ENCODE measurements at regions of chrX and their contacts with region 1.

Region 1: DNA sequence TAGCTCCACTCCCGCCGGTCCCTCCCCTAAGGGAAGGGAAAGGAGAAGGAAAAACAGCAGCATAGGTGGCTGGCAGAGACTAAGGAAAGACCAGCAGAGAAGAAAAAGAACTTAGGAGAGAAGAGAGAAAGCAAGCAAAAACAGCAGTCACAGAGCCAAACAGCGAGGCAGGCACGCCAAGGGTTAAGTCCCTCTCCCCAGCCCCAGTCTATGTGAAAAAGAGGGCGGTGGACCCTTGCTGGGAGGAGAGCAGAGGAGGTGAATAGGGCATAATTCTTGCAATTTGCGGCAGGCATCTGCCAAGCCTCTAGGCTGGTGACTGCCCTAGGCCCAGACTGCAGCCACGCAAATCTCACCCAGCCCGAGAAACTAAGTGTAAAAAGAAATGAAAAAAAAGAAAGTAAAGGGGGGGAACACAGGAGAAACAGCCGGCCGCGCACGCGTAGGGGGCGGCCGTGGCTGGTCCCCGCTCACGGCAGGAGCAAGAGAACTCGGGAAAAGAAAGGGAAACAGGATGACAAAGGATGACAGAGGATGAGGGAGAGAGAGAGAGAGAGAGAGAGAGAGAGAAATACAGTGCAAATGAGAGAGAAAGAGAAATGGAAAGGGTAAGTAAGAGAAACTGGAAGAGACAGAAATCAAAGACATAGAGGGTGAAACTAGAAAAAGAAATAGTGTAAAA is 48.6 kb downstream of the MAGEA9 start:
- DNase-seq: peak; percentile 17
- ATAC-seq: peak; percentile 82
- H3K4me3 ChIP-seq: peak overlapping the region; percentile 57; the same call in 1 of the 2 replicates
- H3K27ac ChIP-seq: peak overlapping the region; percentile 79
- H3K4me1 ChIP-seq: no peaks in the 10 kb centered on the region
- H3K27me3 ChIP-seq: no peaks in the 10 kb centered on the region
- CTCF ChIP-seq: no peak
- EP300 ChIP-seq: no peak
- POLR2A ChIP-seq: no peak
- RAD21 ChIP-seq: no peak

Region 2: GRCh38 chrX:149259241-149259640 is 571.1 kb before region 1 on chrX:
- CTCF ChIA-PET with region 1: no interaction called
- POLR2A ChIA-PET with region 1: no interaction called
- RAD21 ChIA-PET with region 1: no interaction called
- SMC1A ChIA-PET with region 1: no interaction called
- in situ Hi-C with region 1: no loop called
- intact Hi-C with region 1: no loop called
- DNase-seq: no peak
- ATAC-seq: no peak
- H3K4me3 ChIP-seq: no peak overlapping the region
- H3K27ac ChIP-seq: no peak overlapping the region
- H3K4me1 ChIP-seq: no peaks in the 10 kb centered on the region
- H3K27me3 ChIP-seq: no peaks in the 10 kb centered on the region
- CTCF ChIP-seq: no peak
- EP300 ChIP-seq: no peak
- POLR2A ChIP-seq: no peak
- RAD21 ChIP-seq: no peak

Region 3: DNA sequence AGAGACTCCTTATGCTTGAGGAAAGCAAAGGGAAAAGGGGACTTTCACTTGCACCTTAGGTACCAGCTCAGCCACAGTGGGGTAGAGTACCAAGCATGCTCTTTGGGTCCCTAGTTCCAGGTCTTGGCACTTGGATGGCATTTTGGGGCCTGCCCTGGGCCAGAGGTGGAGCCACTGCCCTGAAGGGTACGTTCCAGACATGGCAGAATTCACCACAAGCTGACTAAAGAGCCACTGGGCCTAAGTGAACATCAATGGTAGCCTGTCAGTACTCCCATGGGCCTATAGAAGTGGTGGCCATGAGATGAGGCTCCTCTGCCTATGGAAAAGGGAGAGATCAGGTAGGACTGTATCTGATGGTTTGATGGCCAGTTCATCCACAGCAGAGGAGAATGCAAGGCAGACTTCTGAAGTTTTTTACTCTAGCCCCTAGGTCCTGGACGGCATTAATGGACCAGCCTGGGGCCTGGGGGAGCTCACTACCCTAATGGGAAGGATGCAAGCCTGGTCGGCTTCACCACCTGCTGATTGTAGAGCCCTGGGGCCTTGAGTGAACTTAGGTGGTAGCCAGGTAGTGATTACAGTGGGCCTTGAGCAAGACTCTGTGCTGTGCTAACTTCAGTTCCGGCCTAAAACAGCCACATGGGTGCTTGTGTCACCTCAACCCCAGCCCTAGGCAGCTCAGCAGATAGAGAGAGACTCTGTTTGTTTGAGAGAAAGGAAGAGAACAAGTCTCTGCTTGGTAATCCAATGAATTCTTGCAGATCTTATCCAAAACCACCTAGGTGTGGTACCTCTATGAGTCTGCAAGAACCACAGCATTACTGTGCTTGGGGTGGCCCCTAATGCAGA is 79.2 kb after region 1 on chrX:
- CTCF ChIA-PET with region 1: no interaction called
- POLR2A ChIA-PET with region 1: no interaction called
- RAD21 ChIA-PET with region 1: no interaction called
- SMC1A ChIA-PET with region 1: no interaction called
- in situ Hi-C with region 1: no loop called
- intact Hi-C with region 1: no loop called
- DNase-seq: no peak
- ATAC-seq: peak; percentile 30
- H3K4me3 ChIP-seq: no peak overlapping the region
- H3K27ac ChIP-seq: no peak overlapping the region
- H3K4me1 ChIP-seq: peaks cover 10% of the 10 kb centered on the region
- H3K27me3 ChIP-seq: no peaks in the 10 kb centered on the region
- CTCF ChIP-seq: no peak
- EP300 ChIP-seq: no peak
- POLR2A ChIP-seq: no peak
- RAD21 ChIP-seq: no peak

Region 4: GRCh38 chrX:149938427-149939270 is 108.3 kb after region 1 on chrX and contains the start of gene EOLA2:
- CTCF ChIA-PET with region 1: interaction called, 5 read pairs
- POLR2A ChIA-PET with region 1: interaction called, 3 read pairs
- RAD21 ChIA-PET with region 1: interaction called, 11 read pairs
- SMC1A ChIA-PET with region 1: interaction called, 3 read pairs
- in situ Hi-C with region 1: no loop called
- intact Hi-C with region 1: no loop called
- DNase-seq: peak; percentile 97
- ATAC-seq: peak; percentile 71
- H3K4me3 ChIP-seq: peak within 1 kb of the TSS; percentile 83
- H3K27ac ChIP-seq: peak within 1 kb of the TSS; percentile 69
- H3K4me1 ChIP-seq: no peaks in the 10 kb centered on the region
- H3K27me3 ChIP-seq: no peaks in the 10 kb centered on the region
- CTCF ChIP-seq: peak; percentile 53 to 61 (median 57); a peak in 5 of 6 replicates
- EP300 ChIP-seq: no peak
- POLR2A ChIP-seq: peak; percentile 47
- RAD21 ChIP-seq: no peak
- polyA plus RNA-seq, gene EOLA2: 26.9 to 37.0 TPM

Measured in GM12878 (cell line).